Prostate gland (tissue), 2 donors: ENCODE measurements at regions of chr3 and their contacts with region 1.

Region 1: DNA sequence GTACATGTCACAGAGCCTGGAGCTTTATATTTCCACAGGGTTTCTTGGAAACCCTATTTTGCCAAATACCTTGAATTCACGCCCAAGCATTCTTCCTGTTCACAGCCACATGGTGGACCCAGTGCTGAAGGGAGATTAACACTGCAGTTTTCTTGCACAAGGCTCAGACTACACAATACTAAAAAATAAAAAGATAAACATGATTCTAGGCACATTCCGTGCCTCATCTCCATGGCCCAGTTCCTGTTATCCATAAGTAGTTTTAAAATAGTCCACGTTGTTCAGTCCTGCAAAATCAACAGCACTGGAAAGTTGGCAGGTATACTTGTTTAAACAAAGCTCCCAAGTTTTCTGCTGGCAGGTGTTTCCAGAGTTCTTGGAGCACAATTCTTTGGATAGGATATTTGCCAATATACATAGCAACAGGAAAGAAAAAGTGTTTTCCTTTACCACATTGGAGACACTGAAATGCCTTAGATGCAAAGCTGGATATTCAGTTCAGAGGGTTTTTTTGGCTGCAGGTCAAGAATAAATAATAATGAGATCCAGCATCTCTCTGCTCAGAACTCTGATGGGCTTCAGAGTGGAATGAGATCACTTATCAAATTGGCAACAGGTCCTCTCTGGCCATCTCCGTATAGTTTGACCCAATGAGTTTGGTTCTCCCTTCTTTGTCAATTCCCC is 88.1 kb upstream of the TGFBR2 start:
- DNase-seq: peak; percentile 91
- H3K4me3 ChIP-seq: no peak overlapping the region
- H3K27ac ChIP-seq: peak overlapping the region; percentile 46 to 50
- H3K4me1 ChIP-seq: no peaks in the 10 kb centered on the region
- H3K27me3 ChIP-seq: no peaks in the 10 kb centered on the region
- CTCF ChIP-seq: peak in 1 of 4 experiments; percentile 24
- POLR2A ChIP-seq: no peak

Region 2: DNA sequence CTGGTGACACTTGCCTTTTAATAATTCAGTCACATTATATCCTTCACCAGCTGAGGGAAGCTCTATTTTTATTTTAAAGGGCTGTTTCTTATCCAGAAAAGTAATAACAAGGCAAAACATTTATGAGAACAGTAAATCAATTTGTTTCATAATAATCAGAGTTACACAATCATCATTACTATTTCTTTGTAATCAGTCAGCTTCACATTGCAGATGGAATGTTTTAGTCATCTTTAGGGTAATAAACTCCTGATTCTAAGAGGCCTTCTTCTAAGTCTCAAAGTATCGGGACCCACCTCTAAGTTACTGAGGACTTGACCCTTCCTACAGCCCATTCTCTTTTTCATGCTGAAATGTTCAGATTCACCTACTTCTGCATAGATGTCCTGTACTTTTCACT is 210.2 kb before region 1 on chr3:
- intact Hi-C with region 1: loop called (anchors 5 kb)
- DNase-seq: no peak
- H3K4me3 ChIP-seq: no peak overlapping the region
- H3K27ac ChIP-seq: no peak overlapping the region
- H3K4me1 ChIP-seq: no peaks in the 10 kb centered on the region
- H3K27me3 ChIP-seq: no peaks in the 10 kb centered on the region
- CTCF ChIP-seq: no peak
- POLR2A ChIP-seq: no peak

Region 3: DNA sequence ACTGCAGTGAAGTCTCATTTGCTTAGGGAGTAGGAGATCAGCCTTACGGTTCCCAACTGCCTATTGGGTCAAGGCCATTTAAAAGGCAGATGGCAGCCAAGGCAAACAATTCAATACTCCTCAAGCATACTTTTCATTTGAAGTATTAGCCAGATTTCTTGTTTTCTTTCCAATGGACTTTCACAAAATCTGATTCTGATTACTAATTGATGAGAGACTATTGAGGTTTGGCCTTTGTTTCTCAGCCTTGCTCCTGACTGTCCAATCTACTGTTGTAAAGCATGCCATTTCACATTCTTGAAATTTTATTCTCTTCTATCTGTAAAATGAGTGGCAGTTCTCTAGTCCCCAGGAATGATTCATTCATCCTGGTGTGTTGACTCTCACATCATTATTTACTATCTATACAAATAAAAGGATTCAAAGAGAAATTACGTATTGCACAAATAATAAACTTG is 78.1 kb before region 1 on chr3:
- intact Hi-C with region 1: loop called (anchors 2 kb)
- DNase-seq: no peak
- H3K4me3 ChIP-seq: no peak overlapping the region
- H3K27ac ChIP-seq: peak overlapping the region; percentile 12 to 44
- H3K4me1 ChIP-seq: no peaks in the 10 kb centered on the region
- H3K27me3 ChIP-seq: no peaks in the 10 kb centered on the region
- CTCF ChIP-seq: no peak
- POLR2A ChIP-seq: no peak

Region 4: GRCh38 chr3:30481241-30481640 is 37.1 kb before region 1 on chr3:
- intact Hi-C with region 1: no loop called
- DNase-seq: no peak
- H3K4me3 ChIP-seq: no peak overlapping the region
- H3K27ac ChIP-seq: no peak overlapping the region
- H3K4me1 ChIP-seq: no peaks in the 10 kb centered on the region
- H3K27me3 ChIP-seq: no peaks in the 10 kb centered on the region
- CTCF ChIP-seq: no peak
- POLR2A ChIP-seq: no peak